Panc1 (cell line): ENCODE measurements at regions of chr2 and their contacts with region 1.

Region 1: GRCh38 chr2:51324051-51324450 is 292.1 kb upstream of the NRXN1 start:
- DNase-seq: no peak
- ATAC-seq: no peak
- H3K4me3 ChIP-seq: no peak overlapping the region
- H3K27ac ChIP-seq: no peak overlapping the region
- H3K4me1 ChIP-seq: no peaks in the 10 kb centered on the region
- H3K27me3 ChIP-seq: no peaks in the 10 kb centered on the region
- CTCF ChIP-seq: no peak

Region 2: DNA sequence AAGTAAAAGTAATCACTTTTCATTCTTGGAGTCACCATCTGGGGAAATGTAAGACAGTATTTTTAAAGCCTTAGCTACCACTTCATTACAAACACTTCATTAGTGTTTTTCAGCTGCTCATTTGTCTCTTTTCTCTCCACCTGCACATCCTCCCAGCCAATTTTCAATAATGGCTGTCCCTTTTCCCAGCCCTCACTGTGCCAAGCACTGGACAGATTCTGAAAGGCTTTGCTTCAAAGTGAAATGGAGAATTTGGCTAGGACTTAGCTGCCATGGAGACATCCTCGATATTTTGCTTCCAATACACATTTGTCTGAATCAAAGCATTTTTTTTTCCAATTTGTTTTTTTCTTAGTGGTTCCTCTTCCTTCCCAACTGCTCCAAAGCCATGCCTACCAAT is 19.7 kb before region 1 on chr2:
- CTCF ChIA-PET with region 1: no interaction called
- POLR2A ChIA-PET with region 1: no interaction called
- in situ Hi-C with region 1: no loop called
- intact Hi-C with region 1: loop called (anchors 2 kb)
- DNase-seq: no peak
- ATAC-seq: no peak
- H3K4me3 ChIP-seq: no peak overlapping the region
- H3K27ac ChIP-seq: no peak overlapping the region
- H3K4me1 ChIP-seq: no peaks in the 10 kb centered on the region
- H3K27me3 ChIP-seq: no peaks in the 10 kb centered on the region
- CTCF ChIP-seq: no peak

Region 3: GRCh38 chr2:51595836-51596235 is 271.8 kb after region 1 on chr2:
- CTCF ChIA-PET with region 1: no interaction called
- POLR2A ChIA-PET with region 1: no interaction called
- in situ Hi-C with region 1: no loop called
- intact Hi-C with region 1: no loop called
- DNase-seq: no peak
- ATAC-seq: no peak
- H3K4me3 ChIP-seq: no peak overlapping the region
- H3K27ac ChIP-seq: no peak overlapping the region
- H3K4me1 ChIP-seq: no peaks in the 10 kb centered on the region
- H3K27me3 ChIP-seq: no peaks in the 10 kb centered on the region
- CTCF ChIP-seq: no peak